ENCODE measurements at regions of chr1 and their contacts with region 1.

Region 1: GRCh38 chr1:25099343-25099951 is 132.9 kb downstream of the SYF2 start:
- H3K4me3 Mint-ChIP-seq: no peak overlapping the region
- H3K27ac Mint-ChIP-seq: peak overlapping the region; percentile 31
- H3K4me1 Mint-ChIP-seq: peaks cover 40% of the 10 kb centered on the region
- H3K27me3 Mint-ChIP-seq: peaks cover 13% of the 10 kb centered on the region

Region 2: GRCh38 chr1:25037174-25038074 is 62.0 kb before region 1 on chr1:
- intact Hi-C with region 1: loop called (anchors 10 kb)
- H3K4me3 Mint-ChIP-seq: no peak overlapping the region
- H3K27ac Mint-ChIP-seq: no peak overlapping the region
- H3K4me1 Mint-ChIP-seq: no peaks in the 10 kb centered on the region
- H3K27me3 Mint-ChIP-seq: peaks cover 30% of the 10 kb centered on the region

Region 3: GRCh38 chr1:25247024-25247828 is 147.8 kb after region 1 on chr1 and contains the start of gene RSRP1:
- intact Hi-C with region 1: no loop called
- H3K4me3 Mint-ChIP-seq: peak within 1 kb of the TSS; percentile 96
- H3K27ac Mint-ChIP-seq: peak within 1 kb of the TSS; percentile 97
- H3K4me1 Mint-ChIP-seq: peaks cover 48% of the 10 kb centered on the region
- H3K27me3 Mint-ChIP-seq: no peaks in the 10 kb centered on the region